OCI-LY7 (cell line): ENCODE measurements at regions of chr12 and their contacts with region 1.

Region 1: GRCh38 chr12:127381048-127381668 is 885.8 kb upstream of the TMEM132C start:
- DNase-seq: peak; percentile 24
- H3K4me3 ChIP-seq: no peak overlapping the region
- H3K27ac ChIP-seq: no peak overlapping the region
- H3K4me1 ChIP-seq: no peaks in the 10 kb centered on the region
- CTCF ChIP-seq: peak; percentile 89

Region 2: GRCh38 chr12:127108360-127109215 is 272.6 kb before region 1 on chr12:
- CTCF ChIA-PET with region 1: interaction called, 3 read pairs
- POLR2A ChIA-PET with region 1: interaction called, 3 read pairs
- intact Hi-C with region 1: loop called (anchors 1 kb)
- DNase-seq: peak; percentile 31
- H3K4me3 ChIP-seq: no peak overlapping the region
- H3K27ac ChIP-seq: no peak overlapping the region
- H3K4me1 ChIP-seq: no peaks in the 10 kb centered on the region
- CTCF ChIP-seq: peak; percentile 81

Region 3: GRCh38 chr12:127548123-127548553 is 167.0 kb after region 1 on chr12:
- CTCF ChIA-PET with region 1: no interaction called
- POLR2A ChIA-PET with region 1: no interaction called
- intact Hi-C with region 1: no loop called
- DNase-seq: no peak
- H3K4me3 ChIP-seq: no peak overlapping the region
- H3K27ac ChIP-seq: no peak overlapping the region
- H3K4me1 ChIP-seq: no peaks in the 10 kb centered on the region
- CTCF ChIP-seq: no peak

Region 4: GRCh38 chr12:128476266-128476665 is 1095.1 kb after region 1 on chr12:
- CTCF ChIA-PET with region 1: no interaction called
- POLR2A ChIA-PET with region 1: no interaction called
- intact Hi-C with region 1: no loop called
- DNase-seq: no peak
- H3K4me3 ChIP-seq: no peak overlapping the region
- H3K27ac ChIP-seq: no peak overlapping the region
- H3K4me1 ChIP-seq: no peaks in the 10 kb centered on the region
- CTCF ChIP-seq: no peak